ENCODE measurements at regions of chr10 and their contacts with region 1.

Region 1: DNA sequence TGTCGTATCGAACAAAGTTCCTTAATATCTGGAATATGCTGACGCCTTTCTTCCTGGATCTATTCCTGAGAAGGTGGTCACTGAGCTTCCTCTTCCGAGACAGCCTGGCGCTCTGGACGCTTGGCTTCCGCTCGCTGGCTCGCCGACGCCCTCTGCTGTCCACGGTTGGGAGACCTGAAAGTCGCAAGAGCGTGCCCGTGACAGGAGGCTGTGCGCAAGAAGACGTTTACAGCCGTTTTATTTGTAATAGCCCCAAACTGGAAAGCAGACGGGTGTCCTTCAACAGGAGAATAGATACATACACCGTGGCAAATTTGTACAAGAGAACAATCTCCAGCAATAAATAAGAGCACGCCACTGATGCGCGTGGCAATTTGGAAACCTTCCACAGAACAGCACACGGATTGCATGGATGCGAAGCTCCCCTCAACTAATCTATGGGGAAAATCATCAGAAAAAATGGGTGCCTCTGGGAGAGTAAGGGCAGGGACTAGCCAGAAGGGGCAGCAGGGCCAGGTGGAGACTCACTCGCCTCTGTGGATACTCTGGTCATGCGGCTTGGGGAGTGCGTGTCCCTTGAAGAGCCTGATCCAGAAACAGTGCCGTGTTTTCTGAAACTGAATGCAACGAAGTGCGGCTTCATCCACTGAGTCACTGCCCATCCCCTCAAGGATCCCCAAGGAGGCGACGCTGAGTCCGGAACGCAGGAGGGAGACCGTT is 41.5 kb upstream of the BNIP3 start:
- DNase-seq: peak; percentile 88
- ATAC-seq: peak; percentile 93
- H3K4me3 Mint-ChIP-seq: 0 out of 2 replicates have a peak overlapping the region, but pooled peaks have one; percentile 0
- H3K27ac Mint-ChIP-seq: no peak overlapping the region
- H3K4me1 Mint-ChIP-seq: peaks cover 8% of the 10 kb centered on the region
- H3K27me3 Mint-ChIP-seq: peaks cover 22% of the 10 kb centered on the region
- CTCF ChIP-seq: peak; percentile 76

Region 2: GRCh38 chr10:131900350-131901146 is 122.7 kb before region 1 on chr10 and contains the start of gene PPP2R2D:
- CTCF ChIA-PET with region 1: interaction called, 11 read pairs
- POLR2A ChIA-PET with region 1: interaction called, 3 read pairs
- DNase-seq: peak; percentile 96
- ATAC-seq: peak; percentile 96
- H3K4me3 Mint-ChIP-seq: peak within 1 kb of the TSS; percentile 91
- H3K27ac Mint-ChIP-seq: peak within 1 kb of the TSS; percentile 88
- H3K4me1 Mint-ChIP-seq: peaks cover 33% of the 10 kb centered on the region
- H3K27me3 Mint-ChIP-seq: peaks cover 10% of the 10 kb centered on the region
- CTCF ChIP-seq: no peak
- total RNA-seq, gene PPP2R2D: 28.7 to 33.2 TPM (median 30.0 TPM) in 3 replicates

Region 3: GRCh38 chr10:131961777-131962662 is 61.2 kb before region 1 on chr10:
- CTCF ChIA-PET with region 1: interaction called, 23 read pairs
- POLR2A ChIA-PET with region 1: no interaction called
- DNase-seq: no peak
- ATAC-seq: no peak
- H3K4me3 Mint-ChIP-seq: no peak overlapping the region
- H3K27ac Mint-ChIP-seq: peak overlapping the region; percentile 69
- H3K4me1 Mint-ChIP-seq: peaks cover 6% of the 10 kb centered on the region
- H3K27me3 Mint-ChIP-seq: no peaks in the 10 kb centered on the region
- CTCF ChIP-seq: no peak

Region 4: DNA sequence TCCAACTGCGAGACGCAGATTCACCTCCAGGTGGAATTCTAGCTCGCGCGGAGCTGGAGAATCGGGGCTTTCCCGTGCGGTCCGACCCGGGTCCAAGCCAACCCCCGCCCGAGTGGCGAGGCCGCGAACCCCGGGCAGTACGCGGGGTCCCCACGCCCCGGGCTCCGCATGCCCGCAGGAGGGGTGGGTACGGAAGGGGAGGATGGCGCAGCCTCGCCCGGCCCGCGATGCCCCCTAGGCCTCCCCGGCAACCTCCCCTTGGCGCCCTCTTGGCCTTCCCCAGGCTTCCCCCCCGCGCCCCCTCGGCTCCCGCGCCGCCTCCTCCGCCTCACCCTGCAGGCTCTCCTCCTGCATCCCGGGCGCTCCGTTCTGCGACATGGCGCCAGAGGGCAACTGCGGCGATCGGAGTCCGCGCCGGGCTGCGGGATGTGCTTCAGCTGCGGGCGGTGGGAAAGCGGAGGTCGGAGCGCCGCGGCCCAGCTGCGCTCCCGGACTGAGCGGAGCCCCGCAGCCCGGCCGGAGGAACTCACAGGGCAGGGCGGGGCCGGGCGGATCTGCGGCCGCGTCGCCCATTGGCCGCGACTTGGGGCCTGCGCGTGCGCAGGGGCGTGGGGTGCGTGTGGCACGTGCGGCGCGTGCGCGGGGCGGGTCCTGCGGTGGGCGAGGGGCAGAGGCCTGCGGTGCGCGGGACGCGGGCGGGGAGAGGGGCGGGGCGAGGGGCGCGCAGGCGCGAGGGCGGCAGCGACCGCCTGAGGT is 41.6 kb before region 1 on chr10 and contains the start of gene BNIP3:
- CTCF ChIA-PET with region 1: interaction called, 29 read pairs
- POLR2A ChIA-PET with region 1: no interaction called
- DNase-seq: peak; percentile 89
- ATAC-seq: peak; percentile 88
- H3K4me3 Mint-ChIP-seq: peak within 1 kb of the TSS; percentile 78
- H3K27ac Mint-ChIP-seq: peak within 1 kb of the TSS; percentile 37
- H3K4me1 Mint-ChIP-seq: peaks cover 36% of the 10 kb centered on the region
- H3K27me3 Mint-ChIP-seq: peaks cover 38% of the 10 kb centered on the region
- CTCF ChIP-seq: no peak
- total RNA-seq, gene BNIP3: 113 to 203 TPM (median 189 TPM) in 3 replicates

Region 5: GRCh38 chr10:132011024-132011423 is 12.2 kb before region 1 on chr10:
- CTCF ChIA-PET with region 1: interaction called, 53 read pairs
- POLR2A ChIA-PET with region 1: no interaction called
- DNase-seq: no peak
- ATAC-seq: no peak
- H3K4me3 Mint-ChIP-seq: peak overlapping the region; percentile 27; the same call in 1 of the 2 replicates
- H3K27ac Mint-ChIP-seq: peak overlapping the region; percentile 48
- H3K4me1 Mint-ChIP-seq: peaks cover 71% of the 10 kb centered on the region
- H3K27me3 Mint-ChIP-seq: no peaks in the 10 kb centered on the region
- CTCF ChIP-seq: no peak

Region 6: DNA sequence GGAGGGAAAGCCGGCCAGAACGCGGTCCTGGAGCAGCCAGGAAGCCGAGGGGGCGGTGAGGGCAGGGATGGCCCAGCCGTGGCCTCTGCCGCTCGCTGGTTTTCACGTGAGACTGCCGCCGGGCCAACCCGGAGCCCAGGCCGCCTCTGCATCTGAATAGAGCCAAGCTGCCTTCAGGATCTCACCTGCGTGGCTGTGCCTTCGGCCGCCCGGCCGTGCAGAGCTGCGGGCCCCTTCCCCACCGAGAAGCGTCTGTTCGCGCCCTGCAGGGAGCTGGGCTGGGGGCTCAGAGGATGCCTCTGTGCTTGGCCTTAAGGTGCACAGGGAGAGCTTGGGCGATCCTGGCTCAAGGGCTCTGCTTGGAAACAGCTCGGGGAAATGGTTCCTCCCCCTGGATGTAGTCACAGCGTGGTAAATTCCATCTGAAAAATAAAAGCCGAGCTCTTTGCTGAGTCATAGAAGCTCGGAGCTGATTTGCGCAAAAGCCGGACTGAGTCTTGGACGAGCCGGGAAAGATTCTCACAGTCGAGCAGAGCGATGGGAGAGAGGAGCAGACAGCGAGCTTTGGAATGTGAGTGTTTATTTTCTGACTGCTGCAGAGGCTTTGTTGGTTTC is 42.3 kb after region 1 on chr10 and contains the start of gene JAKMIP3:
- CTCF ChIA-PET with region 1: interaction called, 14 read pairs
- POLR2A ChIA-PET with region 1: no interaction called
- DNase-seq: peak; percentile 64
- ATAC-seq: peak; percentile 89
- H3K4me3 Mint-ChIP-seq: peak within 1 kb of the TSS; percentile 39
- H3K27ac Mint-ChIP-seq: peak within 1 kb of the TSS; percentile 57
- H3K4me1 Mint-ChIP-seq: peaks cover 20% of the 10 kb centered on the region
- H3K27me3 Mint-ChIP-seq: 0 out of 2 replicates have a peak, but pooled peaks cover 4% of the 10 kb centered on the region
- CTCF ChIP-seq: no peak
- total RNA-seq, gene JAKMIP3: 1.2 to 1.7 TPM (median 1.4 TPM) in 3 replicates

Region 7: DNA sequence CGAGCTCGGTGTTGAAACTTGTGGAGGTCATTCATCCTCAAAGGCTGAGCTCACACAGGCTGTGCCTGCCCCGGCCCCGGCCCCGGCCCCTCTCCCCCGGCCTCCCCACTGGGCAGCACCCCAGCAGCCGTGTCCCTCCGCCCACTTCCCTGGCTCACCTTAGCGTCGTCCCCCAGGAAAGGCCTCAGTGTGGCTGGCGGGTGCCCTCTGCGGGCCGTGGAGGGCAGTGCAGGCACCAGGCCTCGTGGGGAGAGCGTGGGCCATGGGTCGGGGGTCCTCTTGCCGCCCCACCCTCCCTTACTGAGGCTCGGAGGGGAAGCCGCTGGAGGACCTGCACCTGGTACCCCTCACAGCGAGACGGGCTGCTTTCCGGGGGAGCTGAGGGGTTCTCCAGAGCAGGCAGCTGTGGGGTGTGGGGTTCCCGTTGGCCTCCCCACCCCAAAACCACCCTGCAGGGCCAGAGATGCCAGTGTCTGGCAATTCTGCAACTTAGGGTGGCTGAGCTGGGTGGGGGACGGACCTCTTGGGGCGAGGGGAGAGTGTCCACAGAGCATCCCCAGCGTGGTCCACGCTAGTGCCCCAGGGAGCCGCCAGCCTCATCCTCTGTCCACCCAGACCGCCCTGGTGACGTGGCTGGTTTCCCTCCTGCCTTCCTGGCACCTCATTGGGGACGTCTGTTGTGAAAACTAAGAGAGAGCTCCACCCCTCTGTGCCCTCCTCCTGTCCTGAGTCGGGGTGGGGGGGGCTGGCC is 119.3 kb after region 1 on chr10:
- CTCF ChIA-PET with region 1: interaction called, 19 read pairs
- POLR2A ChIA-PET with region 1: no interaction called
- DNase-seq: peak; percentile 75
- ATAC-seq: peak; percentile 80
- H3K4me3 Mint-ChIP-seq: no peak overlapping the region
- H3K27ac Mint-ChIP-seq: no peak overlapping the region
- H3K4me1 Mint-ChIP-seq: peaks cover 7% of the 10 kb centered on the region
- H3K27me3 Mint-ChIP-seq: no peaks in the 10 kb centered on the region
- CTCF ChIP-seq: peak; percentile 94

Region 8: DNA sequence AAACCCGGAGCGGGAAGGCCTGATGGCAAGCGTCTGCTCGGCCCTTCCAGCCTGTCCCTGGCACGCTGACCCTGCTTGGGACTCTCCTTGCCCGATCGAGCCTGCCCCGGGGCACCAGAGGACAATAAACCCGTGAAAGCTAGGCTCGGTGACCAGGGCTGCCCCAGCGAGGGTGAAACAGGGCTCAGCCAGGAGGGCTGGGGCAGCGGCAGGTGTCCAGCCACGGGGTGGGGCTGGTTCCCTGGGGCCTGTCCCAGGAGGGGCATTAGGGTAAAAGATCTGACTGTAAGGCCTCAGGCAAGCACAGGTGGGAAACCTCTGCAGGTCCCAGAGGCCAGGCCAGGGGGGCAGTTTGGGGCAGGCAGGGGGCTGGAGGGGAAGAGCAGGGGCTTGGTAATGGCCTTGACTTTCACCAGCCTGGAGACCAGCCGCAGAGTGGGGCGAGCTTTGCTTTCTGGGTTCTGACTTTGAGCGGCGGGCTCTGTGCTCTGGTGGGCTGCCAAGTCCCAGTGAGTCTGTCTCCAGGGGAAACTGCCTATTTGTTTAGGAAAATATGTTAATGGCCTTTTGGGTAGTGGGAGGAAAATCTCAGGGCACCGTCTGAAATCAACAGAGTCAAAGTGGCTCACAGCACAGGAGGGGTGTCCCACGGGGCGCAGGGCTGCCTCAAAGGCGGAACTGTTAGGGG is 446.1 kb after region 1 on chr10:
- CTCF ChIA-PET with region 1: no interaction called
- POLR2A ChIA-PET with region 1: no interaction called
- DNase-seq: no peak
- ATAC-seq: no peak
- H3K4me3 Mint-ChIP-seq: no peak overlapping the region
- H3K27ac Mint-ChIP-seq: peak overlapping the region; percentile 65
- H3K4me1 Mint-ChIP-seq: peaks cover 5% of the 10 kb centered on the region
- H3K27me3 Mint-ChIP-seq: no peaks in the 10 kb centered on the region; the same call in 1 of the 2 replicates
- CTCF ChIP-seq: no peak

Measured in WTC11 (cell line).